Activated naive CD4-positive, alpha-beta T cell treated with anti-CD3 and anti-CD28 coated beads for 36 hours (primary cell): ENCODE measurements at regions of chr13 and their contacts with region 1.

Region 1: DNA sequence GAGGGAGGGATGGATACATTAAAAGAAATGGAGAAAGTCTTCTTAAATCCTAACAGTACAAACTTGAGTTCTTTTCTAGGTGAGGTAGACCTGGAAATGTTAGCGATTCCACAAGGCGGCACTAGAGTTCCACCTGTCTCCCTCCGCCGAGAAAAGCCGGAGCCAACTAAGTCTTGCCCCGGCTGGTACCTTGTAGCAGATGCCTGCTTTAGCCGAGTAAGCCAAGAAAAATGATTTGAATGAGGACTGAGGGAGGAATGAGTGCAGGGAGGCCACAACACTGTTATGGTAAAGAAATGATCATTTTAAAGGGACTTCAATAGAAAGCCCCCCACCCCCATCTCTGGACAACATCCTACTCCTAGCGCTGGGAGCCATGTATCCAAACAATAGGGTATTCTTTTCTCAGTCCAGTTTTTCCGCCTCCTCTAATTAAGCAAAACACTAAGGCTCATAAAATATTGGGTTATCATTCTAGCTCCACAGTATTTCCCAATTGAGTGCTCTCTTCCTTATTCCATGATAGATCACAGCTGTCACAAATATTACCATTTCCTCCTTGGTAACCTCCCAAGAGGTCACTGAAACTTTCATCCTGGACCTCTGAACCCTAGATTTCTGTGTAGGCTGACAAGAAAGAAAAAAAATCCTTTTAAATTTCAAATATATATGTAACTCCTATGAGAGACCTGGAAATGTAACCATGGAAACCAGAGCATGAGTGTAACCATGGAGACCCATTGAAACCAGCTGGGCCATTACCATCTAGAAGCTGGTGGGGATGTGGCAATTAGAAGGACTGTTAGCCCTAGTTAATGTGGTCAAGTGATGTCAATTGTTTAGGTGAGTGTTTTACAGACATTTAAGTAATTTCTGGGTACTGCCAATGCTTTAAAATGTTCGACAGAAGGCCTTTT is 58.3 kb downstream of the GPALPP1 start:
- DNase-seq: peak; percentile 91
- H3K4me3 Mint-ChIP-seq: peak overlapping the region; percentile 65
- H3K27ac Mint-ChIP-seq: no peak overlapping the region
- H3K4me1 Mint-ChIP-seq: peaks cover 21% of the 10 kb centered on the region
- H3K27me3 Mint-ChIP-seq: peaks cover 25% of the 10 kb centered on the region

Region 2: DNA sequence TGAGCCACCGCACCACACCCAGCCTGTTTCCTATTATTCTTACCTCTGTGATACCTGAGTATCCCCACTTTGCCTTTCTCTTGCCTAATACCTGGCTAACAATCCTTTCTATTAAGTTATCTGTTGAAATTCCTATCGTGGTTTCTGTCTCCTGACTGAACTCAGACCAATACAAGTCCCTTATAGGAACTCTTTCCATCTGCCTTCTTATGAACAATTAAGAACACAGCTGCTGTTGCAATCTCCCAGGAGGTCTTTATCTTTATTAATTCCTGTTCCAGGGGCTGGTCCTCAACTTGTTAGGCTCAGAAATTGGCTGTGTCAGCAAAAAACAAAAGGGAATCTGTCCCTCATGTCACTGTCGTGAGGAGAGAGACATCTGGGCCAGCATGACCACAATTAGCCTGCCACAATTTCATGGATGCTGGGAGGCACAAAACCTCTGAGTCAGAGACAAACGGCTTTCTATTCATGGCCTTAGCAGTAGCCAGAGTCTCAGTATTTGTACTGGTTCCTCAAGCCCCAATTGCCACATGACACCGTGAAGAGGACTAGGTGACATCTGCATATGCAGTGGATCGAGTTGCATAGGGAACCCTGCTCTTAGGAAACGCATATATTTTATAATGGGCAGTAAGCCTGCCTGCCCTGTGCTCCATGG is 116.6 kb before region 1 on chr13:
- CTCF ChIA-PET with region 1: no interaction called
- intact Hi-C with region 1: no loop called
- DNase-seq: no peak
- H3K4me3 Mint-ChIP-seq: no peak overlapping the region
- H3K27ac Mint-ChIP-seq: no peak overlapping the region
- H3K4me1 Mint-ChIP-seq: peaks cover 4% of the 10 kb centered on the region
- H3K27me3 Mint-ChIP-seq: peaks cover 3% of the 10 kb centered on the region

Region 3: DNA sequence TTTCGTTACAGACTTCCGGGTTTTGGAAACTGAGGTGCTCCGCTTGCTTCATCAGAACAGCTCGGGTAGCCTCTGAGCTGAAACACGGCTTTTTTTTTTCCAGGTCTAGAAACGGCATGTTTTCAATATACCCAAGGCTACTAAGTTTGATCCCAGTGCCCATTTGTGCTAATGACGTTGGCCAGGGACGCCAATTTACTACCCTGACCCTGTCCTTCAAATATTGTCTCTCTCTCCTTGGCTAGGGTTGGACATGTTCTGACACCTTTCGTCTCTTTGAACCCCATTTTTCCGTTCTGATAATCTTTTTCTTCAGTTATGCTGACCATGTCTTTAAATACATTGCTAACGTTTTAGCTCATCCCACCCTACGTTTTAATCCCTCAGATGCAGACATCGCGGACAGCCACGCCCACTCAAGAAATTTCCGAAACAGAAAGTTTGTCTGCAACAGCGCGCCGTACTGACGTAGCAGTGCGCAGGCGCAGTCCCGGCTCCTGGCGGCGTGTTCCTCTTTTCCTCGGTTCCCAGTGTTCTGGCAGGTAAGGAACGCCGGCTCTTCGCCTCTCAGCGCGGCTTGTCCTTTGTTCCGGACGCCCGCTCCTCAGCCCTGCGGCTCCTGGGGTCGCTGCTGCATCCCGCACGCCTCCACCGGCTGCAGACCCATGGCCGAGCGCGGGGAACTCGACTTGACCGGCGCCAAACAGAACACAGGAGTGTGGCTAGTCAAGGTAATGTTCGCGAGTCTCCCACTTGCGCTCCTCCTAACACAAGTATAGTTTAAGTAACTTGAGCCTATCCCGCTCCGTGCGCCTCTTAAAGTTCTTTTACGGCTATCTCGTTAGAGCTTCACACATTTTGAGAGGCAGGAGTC is 72.6 kb after region 1 on chr13 and contains the start of gene GTF2F2:
- CTCF ChIA-PET with region 1: interaction called, 15 read pairs
- intact Hi-C with region 1: no loop called
- DNase-seq: peak; percentile 88
- H3K4me3 Mint-ChIP-seq: no peak within 1 kb of the TSS
- H3K27ac Mint-ChIP-seq: no peak within 1 kb of the TSS
- H3K4me1 Mint-ChIP-seq: peaks cover 9% of the 10 kb centered on the region
- H3K27me3 Mint-ChIP-seq: no peaks in the 10 kb centered on the region
- total RNA-seq, gene GTF2F2: 21.3 to 22.4 TPM

Region 4: DNA sequence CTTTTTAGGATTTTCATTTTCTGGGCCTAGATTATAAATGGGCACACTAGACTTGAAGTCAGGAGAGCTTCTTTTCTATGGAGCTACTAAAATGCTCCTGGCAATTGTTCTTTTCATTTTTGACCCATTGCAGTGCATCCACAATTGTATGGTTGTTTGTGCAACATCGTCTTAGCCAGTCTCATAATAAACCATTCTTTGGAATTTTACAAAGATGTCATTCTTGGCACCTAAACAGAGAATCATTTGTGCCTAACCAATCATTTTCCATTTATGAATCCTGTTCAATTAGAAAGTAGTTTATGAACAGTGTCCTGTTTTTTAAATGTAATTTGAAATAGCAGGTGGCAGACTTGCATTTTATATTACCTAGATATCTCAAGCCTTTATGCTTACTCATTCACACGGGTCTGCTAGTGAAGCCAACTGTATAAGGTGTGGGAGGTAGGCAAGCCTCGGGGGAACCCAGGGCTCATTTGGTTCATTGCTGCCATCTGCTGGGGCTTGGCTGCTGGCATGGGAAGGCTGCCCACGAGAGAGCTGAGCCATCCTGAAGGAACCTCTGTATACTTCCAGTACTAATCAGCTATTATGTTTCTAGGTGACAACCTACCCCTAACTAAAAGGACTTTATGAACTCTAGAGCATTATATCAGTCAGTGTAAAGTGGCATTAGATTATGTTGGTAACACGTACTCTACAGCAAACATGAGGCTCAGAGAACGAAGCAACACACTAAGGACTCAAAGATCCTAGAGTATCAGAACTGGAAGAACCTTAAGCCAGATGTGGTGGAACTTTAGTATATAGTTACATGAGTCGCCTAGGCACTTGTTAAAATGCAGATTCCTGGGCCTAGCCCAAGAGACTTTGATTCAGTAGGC is 233.3 kb after region 1 on chr13:
- CTCF ChIA-PET with region 1: interaction called, 84 read pairs
- intact Hi-C with region 1: loop called (anchors 1 kb)
- DNase-seq: peak; percentile 79
- H3K4me3 Mint-ChIP-seq: no peak overlapping the region
- H3K27ac Mint-ChIP-seq: no peak overlapping the region
- H3K4me1 Mint-ChIP-seq: peaks cover 5% of the 10 kb centered on the region
- H3K27me3 Mint-ChIP-seq: no peaks in the 10 kb centered on the region

Region 5: GRCh38 chr13:45393941-45394570 is 346.4 kb after region 1 on chr13:
- CTCF ChIA-PET with region 1: no interaction called
- intact Hi-C with region 1: loop called (anchors 1 kb)
- DNase-seq: peak; percentile 61
- H3K4me3 Mint-ChIP-seq: no peak overlapping the region
- H3K27ac Mint-ChIP-seq: no peak overlapping the region
- H3K4me1 Mint-ChIP-seq: peaks cover 47% of the 10 kb centered on the region
- H3K27me3 Mint-ChIP-seq: no peaks in the 10 kb centered on the region

Region 6: DNA sequence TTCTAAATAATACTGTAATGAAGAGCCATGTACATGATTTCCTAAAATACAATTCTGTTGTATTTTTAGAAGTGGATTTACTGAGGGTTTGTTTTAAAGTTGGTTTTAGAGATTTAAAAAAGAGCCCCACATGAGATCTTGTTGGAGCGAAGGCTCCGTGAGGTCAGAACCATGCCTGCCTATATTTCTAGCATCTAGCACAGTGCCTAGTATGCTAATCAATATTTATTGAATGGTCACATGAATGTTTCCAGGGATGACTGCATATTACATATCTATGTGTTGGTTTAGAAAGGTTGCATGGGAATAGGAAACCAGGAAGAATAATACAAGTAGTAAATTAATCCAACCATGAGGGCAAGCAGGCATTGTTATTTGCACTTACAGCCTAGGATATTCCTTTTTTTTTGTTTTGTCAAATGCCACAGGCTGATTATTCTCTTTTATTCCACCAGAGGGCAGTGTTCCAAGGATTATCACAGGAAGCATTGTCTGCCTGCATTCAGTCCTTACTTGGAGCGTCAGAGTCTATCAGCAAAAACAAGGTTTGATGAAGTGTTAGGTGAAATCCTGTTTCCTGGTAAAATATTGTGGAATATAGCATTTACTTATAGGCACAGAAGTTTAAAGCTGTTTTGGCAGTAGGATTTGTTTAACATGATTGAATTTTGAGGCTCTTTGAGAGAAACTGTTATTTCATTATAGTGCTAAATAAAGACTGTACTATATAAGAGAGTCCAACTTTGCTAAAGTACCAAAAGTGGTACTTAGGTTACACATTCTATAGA is 463.9 kb after region 1 on chr13:
- CTCF ChIA-PET with region 1: no interaction called
- intact Hi-C with region 1: loop called (anchors 10 kb)
- DNase-seq: peak; percentile 30
- H3K4me3 Mint-ChIP-seq: no peak overlapping the region
- H3K27ac Mint-ChIP-seq: no peak overlapping the region
- H3K4me1 Mint-ChIP-seq: peaks cover 8% of the 10 kb centered on the region
- H3K27me3 Mint-ChIP-seq: no peaks in the 10 kb centered on the region